ENCODE measurements at regions of chr5 and their contacts with region 1.

Region 1: GRCh38 chr5:32489791-32490582 is 45.4 kb upstream of the ZFR start:
- DNase-seq: peak; percentile 63 to 78
- ATAC-seq: peak; percentile 86 to 92
- H3K4me3 ChIP-seq: no peak overlapping the region
- H3K27ac ChIP-seq: no peak overlapping the region
- H3K4me1 ChIP-seq: no peaks in the 10 kb centered on the region
- CTCF ChIP-seq: peak; percentile 91
- EP300 ChIP-seq: no peak
- POLR2A ChIP-seq: no peak
- RAD21 ChIP-seq: peak; percentile 85 to 86

Region 2: DNA sequence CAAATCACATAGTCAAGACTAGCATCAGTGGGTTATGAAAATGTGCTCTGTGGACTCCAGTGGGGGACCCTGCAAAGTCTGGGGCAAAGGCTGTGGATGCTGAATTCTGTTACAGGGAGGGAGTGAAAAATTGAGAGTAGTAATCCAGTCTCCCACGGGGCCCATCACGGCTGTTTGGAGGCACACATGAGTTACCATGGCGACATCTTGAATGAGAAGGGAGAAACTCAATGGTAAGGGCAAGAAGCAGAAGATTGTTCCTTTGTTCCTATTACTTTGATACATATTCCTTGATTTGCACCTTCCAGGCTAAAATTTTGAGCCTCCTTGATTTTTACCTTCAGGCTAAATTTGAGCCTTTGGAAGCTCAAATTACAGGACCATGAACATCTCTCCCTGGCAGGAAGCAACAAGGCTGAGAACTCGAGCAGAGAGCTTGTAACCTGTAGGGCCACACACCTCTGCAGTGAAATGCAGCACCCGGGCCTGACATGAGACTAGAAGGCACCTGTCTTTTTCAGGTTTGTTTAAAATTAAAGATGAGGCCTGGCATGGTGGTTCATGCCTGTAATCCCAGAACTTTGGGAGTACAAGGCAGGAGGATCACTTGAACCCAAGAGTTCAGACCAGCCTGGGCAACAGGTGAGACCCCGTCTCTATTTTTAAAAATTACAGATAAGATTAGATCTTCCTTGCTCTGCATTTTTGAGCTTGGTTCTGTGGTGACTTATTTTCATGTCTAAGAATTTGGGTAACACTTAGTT is 14.5 kb before region 1 on chr5:
- CTCF ChIA-PET with region 1: interaction called, 79 read pairs
- POLR2A ChIA-PET with region 1: no interaction called
- DNase-seq: no peak
- ATAC-seq: no peak
- H3K4me3 ChIP-seq: no peak overlapping the region
- H3K27ac ChIP-seq: no peak overlapping the region
- H3K4me1 ChIP-seq: no peaks in the 10 kb centered on the region
- CTCF ChIP-seq: no peak
- EP300 ChIP-seq: no peak
- POLR2A ChIP-seq: no peak
- RAD21 ChIP-seq: no peak

Region 3: DNA sequence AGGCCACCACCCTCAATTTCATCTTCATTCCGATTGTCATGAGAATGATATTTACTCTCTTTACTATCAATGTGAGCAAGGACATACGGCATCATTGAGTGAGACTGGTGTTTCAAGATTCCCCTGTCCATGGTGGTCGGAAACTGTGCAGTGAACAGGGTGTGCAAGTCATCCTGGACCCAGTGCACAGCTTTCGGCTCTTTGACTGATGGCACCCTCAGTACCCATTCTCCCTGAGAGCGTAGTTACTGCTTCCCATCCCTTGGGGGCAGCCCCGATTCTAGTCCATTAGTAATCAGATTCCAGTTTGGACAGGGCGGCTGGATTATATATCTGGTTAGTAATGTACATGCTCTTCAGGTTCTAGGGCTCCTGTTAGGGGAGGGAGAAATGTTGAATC is 33.6 kb after region 1 on chr5:
- CTCF ChIA-PET with region 1: interaction called, 17 read pairs
- POLR2A ChIA-PET with region 1: no interaction called
- DNase-seq: peak in 1 of 2 experiments; percentile 12
- ATAC-seq: peak; percentile 87 to 89
- H3K4me3 ChIP-seq: no peak overlapping the region
- H3K27ac ChIP-seq: no peak overlapping the region
- H3K4me1 ChIP-seq: no peaks in the 10 kb centered on the region
- CTCF ChIP-seq: no peak
- EP300 ChIP-seq: no peak
- POLR2A ChIP-seq: no peak
- RAD21 ChIP-seq: peak; percentile 20; a peak in 2 of 5 replicates

Region 4: DNA sequence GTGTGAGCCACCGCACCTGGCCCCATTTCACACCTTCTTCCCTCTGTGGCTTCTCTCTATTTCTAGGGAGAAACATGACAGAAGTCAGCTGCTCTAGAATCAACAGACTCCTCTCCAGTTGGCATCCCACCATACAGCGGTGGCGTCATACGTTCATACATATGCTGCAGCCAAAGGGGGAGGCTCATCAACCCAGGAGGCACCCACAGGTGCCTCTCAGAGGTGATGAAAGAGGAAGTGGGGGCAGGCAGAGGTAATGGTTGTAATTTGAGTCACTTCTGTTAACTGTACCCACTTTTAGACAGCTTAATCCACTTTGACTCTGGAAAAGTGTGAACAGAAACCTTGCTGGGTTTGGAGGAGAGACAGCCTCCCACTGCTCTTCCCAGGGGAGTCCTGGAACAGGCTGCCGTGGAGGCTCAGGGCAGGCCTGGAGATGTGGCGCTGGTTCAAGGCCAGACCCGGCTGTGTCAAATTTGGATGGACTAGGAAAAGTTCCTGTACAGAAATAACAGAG is 48.1 kb after region 1 on chr5:
- CTCF ChIA-PET with region 1: interaction called, 16 read pairs
- POLR2A ChIA-PET with region 1: no interaction called
- DNase-seq: no peak
- ATAC-seq: no peak
- H3K4me3 ChIP-seq: no peak overlapping the region
- H3K27ac ChIP-seq: peak overlapping the region; percentile 51 to 77; a peak in 4 of 6 replicates
- H3K4me1 ChIP-seq: peaks cover 15% of the 10 kb centered on the region; the same call in 2 of the 3 replicates
- CTCF ChIP-seq: no peak
- EP300 ChIP-seq: no peak
- POLR2A ChIP-seq: no peak
- RAD21 ChIP-seq: no peak

Region 5: DNA sequence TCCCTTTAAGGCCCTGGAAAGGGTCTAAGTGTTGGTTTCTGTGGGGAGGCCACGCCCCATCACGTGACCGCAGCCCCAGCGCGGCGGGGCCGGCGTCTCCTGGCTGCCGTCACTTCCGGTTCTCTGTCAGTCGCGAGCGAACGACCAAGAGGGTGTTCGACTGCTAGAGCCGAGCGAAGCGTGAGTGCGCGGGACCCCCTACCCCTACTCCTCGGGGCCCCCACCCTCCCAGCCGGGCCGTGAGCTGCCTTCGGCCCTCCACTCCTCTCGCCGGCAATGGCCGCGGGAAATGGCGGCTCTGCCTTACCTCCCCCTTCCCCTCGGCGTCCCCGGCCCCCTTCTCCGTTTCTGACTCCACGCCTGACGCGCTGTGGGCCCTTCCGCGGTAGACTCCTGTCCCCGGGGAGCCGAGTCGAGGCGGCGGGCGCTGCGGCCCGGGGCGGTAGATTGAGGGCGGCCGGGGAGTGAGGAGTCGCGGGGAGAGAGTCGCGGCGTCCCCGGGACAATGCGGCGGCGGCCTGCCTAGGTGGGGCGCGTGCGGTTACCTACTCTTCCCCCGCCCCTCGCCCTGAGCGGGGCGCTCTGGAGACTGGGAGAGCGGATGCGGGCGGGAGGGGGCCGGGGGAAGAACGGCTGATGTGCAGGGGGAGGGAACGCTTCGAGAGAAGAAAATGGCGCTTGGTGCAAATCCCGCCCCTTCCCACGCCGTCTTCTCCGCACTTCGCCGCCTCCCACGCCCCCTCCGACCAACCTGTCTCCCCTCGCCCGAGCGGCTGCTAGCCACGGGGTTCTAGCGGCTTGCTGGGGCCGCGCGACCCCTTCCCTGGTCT is 95.7 kb after region 1 on chr5 and contains the start of gene SUB1:
- CTCF ChIA-PET with region 1: interaction called, 135 read pairs
- POLR2A ChIA-PET with region 1: interaction called, 9 read pairs
- DNase-seq: peak; percentile 92 to 94
- ATAC-seq: peak; percentile 93 to 94
- H3K4me3 ChIP-seq: peak within 1 kb of the TSS; percentile 85
- H3K27ac ChIP-seq: peak within 1 kb of the TSS; percentile 92 to 96
- H3K4me1 ChIP-seq: peaks cover 24% of the 10 kb centered on the region
- CTCF ChIP-seq: peak; percentile 13; the same call in 1 of the 3 replicates
- EP300 ChIP-seq: no peak
- POLR2A ChIP-seq: peak; percentile 84
- RAD21 ChIP-seq: 0 out of 5 replicates have a peak, but pooled peaks of 1 of the 2 experiments have one; percentile 10
- polyA plus RNA-seq, gene SUB1: 179 and 450 TPM in 2 replicates

Region 6: GRCh38 chr5:32613050-32613672 is 123.2 kb after region 1 on chr5:
- CTCF ChIA-PET with region 1: interaction called, 35 read pairs
- POLR2A ChIA-PET with region 1: no interaction called
- DNase-seq: peak; percentile 76 to 77
- ATAC-seq: peak; percentile 72 to 87; a peak in 5 of 6 replicates
- H3K4me3 ChIP-seq: no peak overlapping the region
- H3K27ac ChIP-seq: no peak overlapping the region
- H3K4me1 ChIP-seq: no peaks in the 10 kb centered on the region
- CTCF ChIP-seq: peak; percentile 92
- EP300 ChIP-seq: no peak
- POLR2A ChIP-seq: no peak
- RAD21 ChIP-seq: peak; percentile 92 to 93